Activated CD4-positive, alpha-beta T cell treated with anti-CD3 and anti-CD28 coated beads for 36 hours (primary cell): ENCODE measurements at regions of chr2 and their contacts with region 1.

Region 1: GRCh38 chr2:219177552-219178376 is at the start of gene RETREG2:
- DNase-seq: peak; percentile 90
- ATAC-seq: peak; percentile 60
- H3K4me3 Mint-ChIP-seq: peak within 1 kb of the TSS; percentile 86
- H3K27ac Mint-ChIP-seq: peak within 1 kb of the TSS; percentile 97
- H3K4me1 Mint-ChIP-seq: peaks cover 52% of the 10 kb centered on the region
- H3K27me3 Mint-ChIP-seq: no peaks in the 10 kb centered on the region
- total RNA-seq, gene RETREG2: 58.8 to 70.1 TPM

Region 2: GRCh38 chr2:218395797-218396687 is 781.7 kb before region 1 on chr2:
- CTCF ChIA-PET with region 1: no interaction called
- POLR2A ChIA-PET with region 1: no interaction called
- intact Hi-C with region 1: loop called in 1 of 2 experiments (anchors 1 kb)
- DNase-seq: peak; percentile 97
- ATAC-seq: peak; percentile 68
- H3K4me3 Mint-ChIP-seq: peak overlapping the region; percentile 85
- H3K27ac Mint-ChIP-seq: peak overlapping the region; percentile 92
- H3K4me1 Mint-ChIP-seq: peaks cover 29% of the 10 kb centered on the region
- H3K27me3 Mint-ChIP-seq: peaks cover 6% of the 10 kb centered on the region

Region 3: DNA sequence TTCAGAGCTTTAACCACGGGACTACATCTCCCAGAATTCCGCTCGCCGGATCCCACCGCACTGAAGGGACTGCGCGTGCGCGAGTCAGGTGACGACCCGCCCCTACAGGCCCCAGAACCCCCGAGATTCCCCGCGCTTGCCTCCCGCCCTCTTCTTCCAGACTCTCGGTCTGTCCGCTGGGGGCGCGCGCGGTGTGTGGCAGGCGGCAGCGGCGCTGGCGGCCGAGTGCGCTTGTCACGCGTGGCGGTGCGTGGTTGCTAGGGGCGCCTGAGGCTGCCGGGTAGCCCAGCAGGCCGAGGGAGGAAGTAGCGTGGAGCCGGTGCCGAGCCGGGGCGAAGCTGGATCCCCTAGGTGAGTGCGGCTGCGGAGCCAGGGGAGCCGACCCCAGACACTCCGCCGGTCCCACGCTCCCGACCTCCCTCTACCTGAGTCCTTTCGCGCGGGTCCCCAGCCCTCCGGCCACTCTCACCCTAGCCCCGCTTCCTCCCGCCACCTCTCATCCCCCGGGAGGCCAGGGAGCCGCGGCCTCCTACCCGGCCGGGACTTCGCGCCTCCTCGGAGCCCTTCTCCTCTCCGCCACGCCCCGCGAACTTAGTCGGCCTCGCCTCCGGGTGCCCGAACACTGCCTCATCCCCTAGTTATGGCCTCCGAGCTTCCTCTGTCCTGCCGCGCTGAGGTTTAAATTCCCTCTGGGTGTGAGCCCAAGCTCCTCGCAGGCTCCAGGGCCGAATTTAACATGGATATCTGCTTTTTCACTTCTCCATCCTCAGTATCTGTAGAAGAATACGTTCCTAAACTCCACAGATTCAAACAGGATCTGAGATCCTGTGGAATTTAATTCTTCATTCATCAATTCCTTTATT is 466.8 kb before region 1 on chr2 and contains the start of gene TTLL4:
- CTCF ChIA-PET with region 1: no interaction called
- POLR2A ChIA-PET with region 1: no interaction called
- intact Hi-C with region 1: loop called in 1 of 2 experiments (anchors 2 kb)
- DNase-seq: peak; percentile 99
- ATAC-seq: peak; percentile 98
- H3K4me3 Mint-ChIP-seq: peak within 1 kb of the TSS; percentile 96
- H3K27ac Mint-ChIP-seq: peak within 1 kb of the TSS; percentile 80
- H3K4me1 Mint-ChIP-seq: peaks cover 20% of the 10 kb centered on the region
- H3K27me3 Mint-ChIP-seq: no peaks in the 10 kb centered on the region
- total RNA-seq, gene TTLL4: 33.7 to 46.6 TPM

Region 4: DNA sequence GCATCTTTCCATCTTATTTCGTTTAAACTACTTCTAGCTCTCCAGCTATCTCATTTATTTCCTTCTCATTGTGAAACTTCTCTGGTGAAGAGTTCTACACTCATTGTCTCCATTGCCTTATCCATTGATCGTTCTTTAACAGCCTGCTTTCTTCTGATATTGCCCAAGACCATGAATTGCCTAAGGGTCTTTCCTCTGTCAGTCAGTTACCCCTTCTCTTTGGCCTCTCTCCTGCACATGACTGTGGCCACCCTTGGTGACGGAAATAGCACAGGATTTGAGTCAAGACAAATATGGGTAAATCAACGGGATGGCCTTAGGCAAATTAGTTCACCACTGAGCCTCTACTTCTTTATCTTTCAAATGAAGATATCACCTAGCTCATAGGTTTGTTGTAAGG is 43.8 kb before region 1 on chr2:
- CTCF ChIA-PET with region 1: no interaction called
- POLR2A ChIA-PET with region 1: no interaction called
- intact Hi-C with region 1: no loop called
- DNase-seq: no peak
- ATAC-seq: no peak
- H3K4me3 Mint-ChIP-seq: no peak overlapping the region
- H3K27ac Mint-ChIP-seq: no peak overlapping the region
- H3K4me1 Mint-ChIP-seq: no peaks in the 10 kb centered on the region
- H3K27me3 Mint-ChIP-seq: no peaks in the 10 kb centered on the region

Region 5: DNA sequence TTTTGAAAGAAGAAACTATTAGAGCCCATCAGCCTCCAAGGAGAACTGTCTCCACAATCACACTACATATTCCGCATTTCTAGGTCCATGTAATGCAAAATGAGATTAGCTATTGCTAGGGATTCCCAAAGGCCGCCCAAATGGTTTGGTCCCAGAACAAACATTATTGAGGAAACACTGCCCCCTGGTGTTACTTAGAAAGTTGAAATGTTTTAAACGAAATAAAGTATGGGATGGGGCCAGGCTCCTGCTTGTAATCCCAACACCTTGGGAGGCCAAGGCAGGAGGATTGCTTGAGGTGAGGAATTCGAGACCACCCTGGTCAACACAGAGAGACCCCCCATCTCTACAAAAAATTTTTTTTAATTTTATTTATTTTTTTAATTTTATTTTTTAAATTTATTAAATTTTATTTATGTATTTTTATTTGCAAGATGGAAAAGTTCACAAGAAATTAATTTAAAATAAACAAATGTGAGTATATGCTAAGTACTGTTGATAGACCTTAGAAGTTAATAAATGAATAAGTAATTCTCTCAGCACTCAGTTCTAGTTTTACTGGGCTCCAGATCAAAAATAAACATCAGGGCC is 22.6 kb before region 1 on chr2:
- CTCF ChIA-PET with region 1: interaction called, 24 read pairs
- POLR2A ChIA-PET with region 1: no interaction called
- intact Hi-C with region 1: loop called (anchors 1 kb)
- DNase-seq: peak; percentile 47
- ATAC-seq: peak; percentile 47
- H3K4me3 Mint-ChIP-seq: no peak overlapping the region
- H3K27ac Mint-ChIP-seq: no peak overlapping the region
- H3K4me1 Mint-ChIP-seq: peaks cover 6% of the 10 kb centered on the region
- H3K27me3 Mint-ChIP-seq: no peaks in the 10 kb centered on the region

Region 6: DNA sequence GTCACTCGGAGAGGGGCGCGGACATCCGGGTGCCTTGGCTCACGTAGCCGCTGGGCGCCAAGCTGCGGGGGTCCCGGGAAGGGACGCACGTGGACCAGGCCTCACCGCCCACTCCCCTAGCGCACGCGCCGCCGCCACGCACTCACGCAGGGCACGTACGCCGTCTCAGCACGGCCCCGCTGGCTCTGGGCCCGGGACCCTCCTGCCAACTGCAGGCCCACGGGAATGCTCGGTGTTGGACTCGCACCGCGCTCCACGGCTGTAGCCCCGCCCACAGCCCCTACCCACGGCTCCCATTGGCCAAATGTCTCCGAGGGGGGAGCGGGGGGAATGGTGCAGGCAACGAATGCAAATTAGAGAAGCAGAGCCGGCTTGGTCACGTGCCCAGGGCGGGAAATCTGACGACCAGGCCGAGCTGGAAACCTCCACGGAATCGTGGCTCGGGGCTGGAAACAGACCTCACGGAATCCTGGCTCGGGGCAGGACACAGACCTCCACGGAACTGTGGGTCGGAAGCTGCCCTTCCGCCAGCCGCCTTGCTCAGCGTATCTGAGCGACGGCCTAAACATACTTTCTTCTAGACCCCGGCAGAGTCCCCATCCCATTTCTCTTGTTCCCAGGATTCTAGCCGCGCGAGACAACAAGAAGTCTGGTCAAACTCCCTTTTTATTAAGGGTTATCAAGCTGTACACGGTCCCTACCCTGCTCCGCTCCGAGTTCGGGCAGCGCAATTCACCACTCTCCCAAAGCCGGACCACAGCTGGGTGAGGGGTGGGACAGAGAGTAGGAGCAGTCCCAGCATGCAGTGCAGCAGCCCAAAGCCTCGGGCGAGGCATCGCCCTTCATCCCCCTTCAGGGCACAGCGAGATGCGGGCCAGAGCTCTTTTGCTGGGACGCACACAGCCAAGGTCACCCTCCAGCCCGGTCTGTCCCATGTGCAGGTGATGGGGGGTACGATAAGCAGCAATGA is 41.3 kb after region 1 on chr2 and contains the start of gene ABCB6:
- CTCF ChIA-PET with region 1: interaction called, 7 read pairs
- POLR2A ChIA-PET with region 1: no interaction called
- intact Hi-C with region 1: loop called in 1 of 2 experiments (anchors 1 kb)
- DNase-seq: peak; percentile 94
- ATAC-seq: peak; percentile 89
- H3K4me3 Mint-ChIP-seq: peak within 1 kb of the TSS; percentile 83
- H3K27ac Mint-ChIP-seq: peak within 1 kb of the TSS; percentile 74
- H3K4me1 Mint-ChIP-seq: peaks cover 24% of the 10 kb centered on the region
- H3K27me3 Mint-ChIP-seq: no peaks in the 10 kb centered on the region
- total RNA-seq, gene ABCB6: 18.2 to 21.9 TPM

Region 7: DNA sequence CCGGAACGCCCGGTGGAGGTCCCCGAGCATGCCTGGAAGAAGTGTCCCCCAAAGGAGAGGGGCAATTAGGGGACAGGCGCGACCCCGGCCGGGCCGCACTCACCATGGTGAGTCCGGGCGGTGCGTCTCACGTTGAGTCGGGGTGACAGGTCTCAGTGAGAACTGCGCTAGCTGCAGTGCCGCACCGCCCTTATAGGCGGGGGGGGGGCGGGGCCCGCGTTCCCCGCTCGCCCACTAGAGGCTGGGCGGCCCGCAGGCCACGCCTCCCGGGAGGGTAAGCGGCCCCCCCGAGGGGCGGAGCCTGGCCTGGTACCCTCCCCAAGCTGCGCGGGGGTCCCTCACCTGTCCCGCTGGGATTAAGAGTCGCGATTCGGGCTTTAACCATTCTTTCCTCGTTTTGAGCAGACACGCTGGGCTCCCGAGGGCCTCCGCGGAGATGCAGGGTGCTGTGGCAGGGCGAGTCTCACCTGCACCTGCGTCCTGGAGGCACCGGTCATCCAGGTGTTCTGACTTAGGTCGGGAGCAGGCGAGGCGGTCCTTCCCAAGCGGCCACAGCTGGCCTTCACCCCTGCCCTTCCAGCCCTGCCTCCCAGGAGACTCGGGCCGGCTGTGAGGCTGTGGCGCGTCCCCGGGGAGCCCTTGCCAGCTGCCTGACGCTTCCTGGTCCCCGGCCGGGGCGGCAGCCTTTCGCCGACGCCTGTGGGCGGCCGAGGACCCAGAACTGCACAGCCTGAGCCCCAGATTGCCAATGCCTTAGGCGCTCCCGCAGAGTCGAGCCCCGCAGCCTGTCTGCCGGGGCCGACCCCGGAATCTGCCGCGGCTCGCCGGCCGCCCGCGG is 76.2 kb after region 1 on chr2 and contains the start of gene TUBA4A:
- CTCF ChIA-PET with region 1: interaction called, 6 read pairs
- POLR2A ChIA-PET with region 1: interaction called, 5 read pairs
- intact Hi-C with region 1: loop called in 1 of 2 experiments (anchors 1 kb)
- DNase-seq: peak; percentile 94
- ATAC-seq: peak; percentile 63
- H3K4me3 Mint-ChIP-seq: peak within 1 kb of the TSS; percentile 89
- H3K27ac Mint-ChIP-seq: peak within 1 kb of the TSS; percentile 93
- H3K4me1 Mint-ChIP-seq: peaks cover 54% of the 10 kb centered on the region
- H3K27me3 Mint-ChIP-seq: no peaks in the 10 kb centered on the region
- total RNA-seq, gene TUBA4A: 210 to 369 TPM

Region 8: GRCh38 chr2:219498280-219499057 is 320.7 kb after region 1 on chr2 and contains the start of gene GMPPA:
- CTCF ChIA-PET with region 1: no interaction called
- POLR2A ChIA-PET with region 1: no interaction called
- intact Hi-C with region 1: loop called in 1 of 2 experiments (anchors 1 kb)
- DNase-seq: peak; percentile 96
- ATAC-seq: peak; percentile 97
- H3K4me3 Mint-ChIP-seq: peak within 1 kb of the TSS; percentile 86
- H3K27ac Mint-ChIP-seq: peak within 1 kb of the TSS; percentile 72
- H3K4me1 Mint-ChIP-seq: peaks cover 38% of the 10 kb centered on the region
- H3K27me3 Mint-ChIP-seq: peaks cover 38% of the 10 kb centered on the region
- total RNA-seq, gene GMPPA: 35.2 to 35.5 TPM

Region 9: DNA sequence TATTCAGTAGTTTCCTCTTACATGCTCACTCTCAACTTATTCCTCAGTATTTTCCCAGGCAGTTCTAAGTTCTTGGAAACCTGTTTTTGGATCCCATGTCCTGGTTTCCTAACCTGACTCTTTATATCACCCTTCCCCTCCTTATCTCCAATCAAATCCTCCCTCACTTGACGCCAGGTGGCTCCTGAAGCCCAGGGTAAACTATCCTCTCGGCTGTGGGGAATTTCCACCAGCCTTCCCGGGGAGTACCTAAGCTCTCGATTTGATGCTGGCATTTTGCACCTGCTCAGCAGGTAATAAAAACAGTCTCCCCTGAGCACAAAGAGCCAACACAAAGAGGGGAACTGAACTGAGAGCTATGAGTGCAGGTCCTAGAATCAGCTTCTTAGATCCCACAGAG is 987.6 kb after region 1 on chr2:
- CTCF ChIA-PET with region 1: no interaction called
- POLR2A ChIA-PET with region 1: no interaction called
- intact Hi-C with region 1: no loop called
- DNase-seq: no peak
- ATAC-seq: no peak
- H3K4me3 Mint-ChIP-seq: no peak overlapping the region
- H3K27ac Mint-ChIP-seq: no peak overlapping the region
- H3K4me1 Mint-ChIP-seq: no peaks in the 10 kb centered on the region
- H3K27me3 Mint-ChIP-seq: no peaks in the 10 kb centered on the region